WTC11 (cell line): ENCODE measurements at regions of chr18 and their contacts with region 1.

Region 1: GRCh38 chr18:45850021-45850420 is 24.5 kb downstream of the SIGLEC15 start:
- DNase-seq: peak; percentile 66
- ATAC-seq: peak; percentile 83
- H3K4me3 Mint-ChIP-seq: no peak overlapping the region
- H3K27ac Mint-ChIP-seq: no peak overlapping the region
- H3K4me1 Mint-ChIP-seq: 0 out of 2 replicates have a peak, but pooled peaks cover 5% of the 10 kb centered on the region
- H3K27me3 Mint-ChIP-seq: no peaks in the 10 kb centered on the region
- CTCF ChIP-seq: peak; percentile 20; the same call in 1 of the 2 replicates

Region 2: DNA sequence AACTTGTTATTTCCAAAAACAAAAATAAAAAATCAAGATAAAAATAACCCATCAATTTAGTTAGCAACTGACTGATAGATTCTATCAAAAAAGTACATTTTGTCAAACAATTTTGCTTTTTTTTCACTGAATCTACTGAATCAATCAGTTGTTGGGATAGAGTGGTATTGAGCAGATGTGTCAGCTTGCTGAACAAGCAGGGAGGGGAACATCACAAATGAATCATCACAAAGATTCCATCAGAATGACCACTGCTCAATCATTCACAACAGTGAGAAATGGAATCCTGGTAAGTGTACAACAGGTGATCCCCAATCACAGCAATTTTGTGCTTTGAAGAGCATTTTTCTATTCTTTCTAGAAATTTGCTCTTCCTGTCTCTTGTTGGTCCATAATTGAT is 247.1 kb before region 1 on chr18:
- CTCF ChIA-PET with region 1: no interaction called
- POLR2A ChIA-PET with region 1: no interaction called
- DNase-seq: no peak
- ATAC-seq: no peak
- H3K4me3 Mint-ChIP-seq: no peak overlapping the region
- H3K27ac Mint-ChIP-seq: no peak overlapping the region
- H3K4me1 Mint-ChIP-seq: peaks cover 19% of the 10 kb centered on the region
- H3K27me3 Mint-ChIP-seq: no peaks in the 10 kb centered on the region
- CTCF ChIP-seq: no peak

Region 3: GRCh38 chr18:45652303-45653080 is 197.5 kb before region 1 on chr18:
- CTCF ChIA-PET with region 1: no interaction called
- POLR2A ChIA-PET with region 1: no interaction called
- DNase-seq: no peak
- ATAC-seq: peak; percentile 40
- H3K4me3 Mint-ChIP-seq: no peak overlapping the region
- H3K27ac Mint-ChIP-seq: no peak overlapping the region
- H3K4me1 Mint-ChIP-seq: peaks cover 19% of the 10 kb centered on the region
- H3K27me3 Mint-ChIP-seq: peaks cover 30% of the 10 kb centered on the region
- CTCF ChIP-seq: no peak

Region 4: DNA sequence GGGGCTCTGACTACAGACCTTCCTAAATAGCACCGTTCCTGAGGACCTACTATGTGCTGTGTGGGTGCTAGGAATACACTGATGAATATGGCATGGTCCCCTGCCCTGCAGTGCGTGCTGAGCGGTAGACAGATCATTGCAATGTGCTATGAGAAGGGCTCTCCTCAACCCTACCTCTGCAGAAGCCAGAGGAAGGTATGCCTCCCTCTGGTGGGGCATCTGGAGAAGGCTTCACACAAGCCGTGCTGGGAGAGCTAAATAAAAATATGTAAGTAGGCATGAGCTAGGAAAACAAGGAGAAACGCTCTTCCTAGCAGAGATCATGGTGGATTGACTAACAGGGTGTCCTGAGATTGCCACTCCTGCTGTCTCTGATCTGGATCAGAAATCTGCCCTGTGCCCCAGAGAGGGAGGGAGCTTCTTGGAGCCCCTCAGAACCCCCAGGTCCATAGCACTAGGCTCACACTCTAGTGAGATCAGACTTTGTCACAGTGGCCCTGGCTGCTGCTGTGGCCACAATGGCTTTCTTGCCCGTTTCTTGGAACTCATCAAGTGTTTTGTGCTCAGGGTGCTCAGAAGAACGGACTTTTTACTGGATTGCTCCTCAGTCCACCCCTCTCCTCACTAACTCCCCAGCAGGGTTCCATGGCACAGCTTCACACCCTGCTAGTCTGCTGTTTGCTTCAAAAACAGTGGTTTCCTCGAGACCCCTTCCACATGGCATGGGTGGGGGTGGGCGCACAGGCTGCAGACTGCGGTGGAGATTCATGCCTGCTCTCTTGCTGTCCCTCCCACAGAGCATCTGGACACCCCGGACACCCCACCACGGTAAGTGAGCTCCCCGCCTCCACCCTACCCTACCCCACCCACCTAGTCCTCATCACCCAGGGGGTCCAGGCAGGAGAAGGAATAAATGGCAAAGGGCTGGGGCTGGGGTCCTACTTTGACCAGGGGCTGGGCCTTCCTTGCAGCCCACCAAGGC is 10.3 kb before region 1 on chr18:
- CTCF ChIA-PET with region 1: interaction called, 16 read pairs
- POLR2A ChIA-PET with region 1: no interaction called
- DNase-seq: peak; percentile 56
- ATAC-seq: peak; percentile 65
- H3K4me3 Mint-ChIP-seq: no peak overlapping the region
- H3K27ac Mint-ChIP-seq: no peak overlapping the region
- H3K4me1 Mint-ChIP-seq: peaks cover 22% of the 10 kb centered on the region
- H3K27me3 Mint-ChIP-seq: peaks cover 44% of the 10 kb centered on the region
- CTCF ChIP-seq: peak; percentile 40; the same call in 1 of the 2 replicates